A549 (cell line): ENCODE measurements at regions of chr20 and their contacts with region 1.

Region 1: GRCh38 chr20:36808317-36809257 is 35.0 kb upstream of the DSN1 start:
- DNase-seq: peak; percentile 68 to 83
- ATAC-seq: peak; percentile 82 to 89
- H3K4me3 ChIP-seq: no peak overlapping the region
- H3K27ac ChIP-seq: peak overlapping the region; percentile 47 to 52
- H3K4me1 ChIP-seq: peaks cover 12% of the 10 kb centered on the region
- CTCF ChIP-seq: peak; percentile 87
- EP300 ChIP-seq: no peak
- POLR2A ChIP-seq: no peak
- RAD21 ChIP-seq: peak; percentile 23 to 43; a peak in 3 of 5 replicates

Region 2: GRCh38 chr20:36273414-36274180 is 535.0 kb before region 1 on chr20:
- CTCF ChIA-PET with region 1: no interaction called
- POLR2A ChIA-PET with region 1: no interaction called
- DNase-seq: peak; percentile 28 to 58
- ATAC-seq: peak; percentile 41 to 69; a peak in 4 of 6 replicates
- H3K4me3 ChIP-seq: no peak overlapping the region
- H3K27ac ChIP-seq: no peak overlapping the region
- H3K4me1 ChIP-seq: no peaks in the 10 kb centered on the region
- CTCF ChIP-seq: peak; percentile 56
- EP300 ChIP-seq: no peak
- POLR2A ChIP-seq: no peak
- RAD21 ChIP-seq: peak; percentile 54 to 64

Region 3: GRCh38 chr20:36792422-36792821 is 16.2 kb before region 1 on chr20:
- CTCF ChIA-PET with region 1: interaction called, 35 read pairs
- POLR2A ChIA-PET with region 1: no interaction called
- DNase-seq: peak; percentile 54 to 77
- ATAC-seq: peak; percentile 81 to 90; a peak in 5 of 6 replicates
- H3K4me3 ChIP-seq: no peak overlapping the region
- H3K27ac ChIP-seq: no peak overlapping the region
- H3K4me1 ChIP-seq: no peaks in the 10 kb centered on the region
- CTCF ChIP-seq: peak; percentile 37
- EP300 ChIP-seq: no peak
- POLR2A ChIP-seq: no peak
- RAD21 ChIP-seq: peak; percentile 34 to 42; a peak in 3 of 5 replicates

Region 4: GRCh38 chr20:36827474-36827873 is 18.9 kb after region 1 on chr20:
- CTCF ChIA-PET with region 1: interaction called, 48 read pairs
- POLR2A ChIA-PET with region 1: no interaction called
- DNase-seq: no peak
- ATAC-seq: no peak
- H3K4me3 ChIP-seq: no peak overlapping the region
- H3K27ac ChIP-seq: no peak overlapping the region
- H3K4me1 ChIP-seq: peaks cover 5% of the 10 kb centered on the region; the same call in 2 of the 3 replicates
- CTCF ChIP-seq: no peak
- EP300 ChIP-seq: no peak
- POLR2A ChIP-seq: no peak
- RAD21 ChIP-seq: no peak

Region 5: GRCh38 chr20:36847009-36847709 is 38.6 kb after region 1 on chr20:
- CTCF ChIA-PET with region 1: interaction called, 14 read pairs
- POLR2A ChIA-PET with region 1: no interaction called
- DNase-seq: no peak
- ATAC-seq: no peak
- H3K4me3 ChIP-seq: no peak overlapping the region
- H3K27ac ChIP-seq: peak overlapping the region in 1 of 2 experiments; percentile 71; a peak in 2 of 6 replicates
- H3K4me1 ChIP-seq: peaks cover 30% of the 10 kb centered on the region
- CTCF ChIP-seq: no peak
- EP300 ChIP-seq: no peak
- POLR2A ChIP-seq: no peak
- RAD21 ChIP-seq: no peak

Region 6: DNA sequence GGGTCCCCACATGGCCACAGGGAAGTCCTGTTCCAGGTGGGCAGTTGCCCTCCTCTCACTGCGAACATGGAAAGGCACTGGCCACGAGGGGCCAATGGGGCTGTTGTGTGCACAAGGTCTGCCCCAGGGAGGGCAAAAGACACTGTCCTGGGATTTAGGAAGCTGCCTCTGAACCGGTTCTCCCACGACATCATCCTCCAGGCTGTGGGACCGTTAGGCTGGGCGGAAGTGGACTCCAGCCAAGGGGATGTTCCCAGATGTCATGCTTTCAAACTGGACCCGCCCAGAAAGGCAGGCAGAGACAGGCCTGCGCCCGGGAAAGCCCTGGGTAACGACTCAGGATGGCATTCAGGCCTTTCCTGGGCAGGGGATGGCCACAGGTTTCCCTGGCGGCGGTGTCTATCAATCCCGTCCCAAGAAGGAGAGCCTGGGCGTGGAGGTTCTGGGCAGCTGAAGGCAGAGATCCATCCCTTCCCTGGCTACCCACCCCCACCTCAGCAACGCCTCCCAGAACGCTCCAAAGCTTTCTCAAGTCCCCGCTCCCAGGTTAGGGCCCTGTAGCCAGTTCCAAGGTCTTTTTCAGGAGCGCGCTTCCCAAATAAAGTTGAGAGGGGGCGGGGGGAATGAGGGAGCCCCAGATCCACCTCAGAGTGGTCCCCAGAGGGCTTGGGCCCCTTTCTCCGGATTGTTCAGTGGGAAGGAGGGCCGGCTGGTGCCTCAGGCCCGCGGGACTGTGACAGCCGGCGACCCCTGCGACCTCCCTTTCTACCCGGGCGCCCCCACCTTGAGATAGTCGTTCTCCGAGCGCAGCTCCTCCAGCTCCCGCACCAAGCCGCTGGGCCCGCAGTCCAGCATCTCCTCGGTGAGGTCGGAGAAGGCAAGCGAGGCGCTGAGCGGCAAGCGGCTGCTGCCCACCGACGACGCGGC is 53.6 kb after region 1 on chr20:
- CTCF ChIA-PET with region 1: interaction called, 21 read pairs
- POLR2A ChIA-PET with region 1: no interaction called
- DNase-seq: peak; percentile 91 to 96
- ATAC-seq: peak; percentile 47 to 80
- H3K4me3 ChIP-seq: peak overlapping the region; percentile 85
- H3K27ac ChIP-seq: peak overlapping the region; percentile 79 to 96
- H3K4me1 ChIP-seq: peaks cover 31% of the 10 kb centered on the region; the same call in 2 of the 3 replicates
- CTCF ChIP-seq: no peak
- EP300 ChIP-seq: no peak
- POLR2A ChIP-seq: peak; percentile 76
- RAD21 ChIP-seq: no peak; a peak in 1 of 5 replicates

Region 7: DNA sequence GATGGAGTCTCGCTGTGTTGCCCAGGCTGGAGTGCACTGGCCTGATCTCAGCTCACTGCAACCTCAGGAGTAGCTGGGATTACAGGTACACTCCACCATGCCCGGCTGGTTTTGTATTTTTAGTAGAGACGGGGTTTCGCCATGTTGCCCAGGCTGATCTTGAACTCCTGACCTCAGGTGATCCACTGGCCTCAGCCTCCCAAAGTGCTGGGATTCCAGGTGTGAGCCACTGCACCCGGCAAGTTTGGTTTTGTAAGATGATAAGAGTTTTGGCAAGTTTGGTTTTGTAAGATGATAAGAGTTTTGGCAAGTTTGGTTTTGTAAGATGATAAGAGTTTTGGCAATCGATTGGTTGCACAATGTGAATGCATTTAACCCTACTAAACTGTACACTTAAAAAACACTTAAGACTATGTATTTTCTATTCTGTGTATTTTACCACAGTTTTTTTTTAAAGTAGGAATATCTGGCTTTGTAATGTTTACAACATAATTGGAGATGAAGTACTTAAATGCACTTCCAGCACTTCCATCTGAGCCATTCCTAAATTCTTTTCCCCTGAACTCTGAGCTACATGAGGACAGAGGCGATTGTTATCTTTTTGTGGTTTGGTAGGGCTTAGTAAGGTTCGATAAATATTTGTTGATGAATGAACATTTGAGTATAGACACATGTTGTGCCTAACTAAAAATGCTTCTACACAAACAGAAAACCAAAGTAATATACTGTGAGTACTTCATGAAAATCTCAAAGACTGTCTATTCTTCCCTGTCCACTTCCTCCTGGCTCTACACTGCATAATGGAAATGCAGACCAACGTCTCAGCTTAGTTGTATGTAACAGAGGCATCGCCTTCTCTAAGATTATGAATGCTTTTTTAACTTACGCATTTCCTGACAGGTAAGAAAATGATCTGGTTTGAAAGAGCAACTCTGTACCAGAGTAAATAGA is 124.2 kb after region 1 on chr20:
- CTCF ChIA-PET with region 1: no interaction called
- POLR2A ChIA-PET with region 1: no interaction called
- DNase-seq: no peak
- ATAC-seq: no peak
- H3K4me3 ChIP-seq: no peak overlapping the region
- H3K27ac ChIP-seq: no peak overlapping the region
- H3K4me1 ChIP-seq: peaks cover 4% of the 10 kb centered on the region; the same call in 1 of the 3 replicates
- CTCF ChIP-seq: no peak
- EP300 ChIP-seq: no peak
- POLR2A ChIP-seq: no peak
- RAD21 ChIP-seq: no peak